ENCODE measurements at regions of chrX and their contacts with region 1.

Region 1: GRCh38 chrX:95156566-95156965 is 1482.6 kb downstream of the FAM133A start:
- DNase-seq: no peak
- H3K4me3 ChIP-seq: no peak overlapping the region
- H3K27ac ChIP-seq: no peak overlapping the region
- H3K4me1 ChIP-seq: no peaks in the 10 kb centered on the region
- H3K27me3 ChIP-seq: no peaks in the 10 kb centered on the region
- CTCF ChIP-seq: no peak
- EP300 ChIP-seq: no peak
- POLR2A ChIP-seq: no peak

Region 2: DNA sequence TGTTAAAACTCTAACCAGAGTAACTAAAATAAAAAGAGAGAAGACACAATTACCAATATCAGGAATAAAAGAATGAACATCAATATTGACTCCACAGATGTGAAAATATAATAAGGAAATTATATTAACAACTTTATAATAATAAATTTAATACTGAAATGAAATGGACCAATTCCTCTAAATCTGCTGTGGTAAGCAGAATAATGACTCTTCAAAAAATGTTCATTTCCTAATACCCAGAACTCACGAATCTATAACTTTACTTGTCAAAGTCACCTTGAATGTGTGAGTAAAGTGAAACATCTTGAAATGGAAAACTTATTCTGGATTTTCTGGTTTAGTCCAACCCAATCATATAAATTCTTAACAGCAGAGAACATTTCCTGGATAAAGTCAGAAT is 91.4 kb before region 1 on chrX:
- intact Hi-C with region 1: loop called in 1 of 4 experiments (anchors 5 kb)
- DNase-seq: no peak
- H3K4me3 ChIP-seq: no peak overlapping the region
- H3K27ac ChIP-seq: no peak overlapping the region
- H3K4me1 ChIP-seq: no peaks in the 10 kb centered on the region
- H3K27me3 ChIP-seq: no peaks in the 10 kb centered on the region
- CTCF ChIP-seq: no peak
- EP300 ChIP-seq: no peak
- POLR2A ChIP-seq: no peak

Measured in ovary (tissue), 10 donors.